Dorsolateral prefrontal cortex (tissue), 120 donors: ENCODE measurements at regions of chr3 and their contacts with region 1.

Region 1: DNA sequence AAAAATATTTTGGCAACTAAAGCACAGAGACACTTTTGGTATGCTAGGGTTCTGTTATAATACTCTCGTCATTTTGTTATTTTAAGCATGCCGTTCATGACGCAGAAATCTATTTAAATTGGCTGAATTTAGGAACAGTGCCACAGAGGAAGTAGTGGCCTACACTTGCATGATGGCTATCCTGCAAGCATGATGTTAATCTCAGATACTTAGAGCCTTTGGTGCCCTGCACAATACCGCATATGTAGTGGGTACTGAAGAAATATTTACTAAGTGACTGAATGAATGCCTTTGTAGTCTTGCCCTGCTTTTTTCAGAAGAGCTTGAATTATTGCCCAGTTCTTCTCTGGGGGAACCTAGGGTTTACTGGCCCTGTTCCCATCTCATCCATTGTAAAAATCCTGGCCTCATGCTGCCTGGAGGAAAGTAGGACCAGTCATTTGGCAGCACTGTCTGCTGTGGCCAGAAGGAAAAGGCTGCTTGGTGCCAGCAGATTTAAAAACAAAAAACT is 79.0 kb downstream of the SERPINI1 start:
- DNase-seq: peak in 8 of 10 donors; percentile 45 to 74 (median 66)
- H3K4me3 ChIP-seq: peak overlapping the region in 16 of 59 donors; percentile 1 to 35 (median 14)
- H3K27ac ChIP-seq: peak overlapping the region in 58 of 59 donors; percentile 19 to 85 (median 76)
- H3K27me3 ChIP-seq: no peaks in the 10 kb centered on the region
- CTCF ChIP-seq: peak in 15 of 56 donors; percentile 3 to 35 (median 19)

Region 2: DNA sequence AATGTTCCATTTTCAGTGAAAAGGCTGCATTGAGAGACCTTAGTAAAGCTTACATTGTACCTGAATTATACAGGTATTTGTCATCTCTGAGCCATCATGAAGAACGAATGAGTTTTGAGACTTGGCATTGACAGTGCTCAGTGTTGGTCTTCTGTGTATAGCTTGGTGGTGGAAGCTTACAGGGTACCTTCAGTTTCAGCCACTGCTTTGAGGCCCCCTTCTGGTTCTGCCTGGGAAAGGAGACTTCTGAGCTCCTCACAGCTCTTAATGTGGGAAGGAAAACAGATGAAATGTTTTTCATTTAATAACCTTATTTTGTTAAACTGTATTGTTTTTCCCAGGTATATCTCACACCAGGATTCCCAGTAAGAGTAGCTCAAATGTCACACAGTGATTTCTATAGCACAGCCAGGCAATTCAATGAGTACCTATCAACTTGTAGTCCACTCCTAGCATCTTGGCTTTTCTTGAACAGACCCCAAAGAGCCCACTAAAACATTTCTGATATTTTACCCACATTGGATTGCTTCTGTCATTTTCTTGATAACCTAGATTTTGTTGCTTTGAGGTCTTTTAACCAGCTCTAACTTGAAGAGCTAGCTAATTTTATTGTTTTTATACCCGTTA is 73.4 kb before region 1 on chr3:
- intact Hi-C with region 1: loop called in 1 of 2 experiments (anchors 2 kb)
- DNase-seq: peak in 8 of 10 donors; percentile 45 to 74 (median 61)
- H3K4me3 ChIP-seq: peak overlapping the region in 26 of 59 donors; percentile 1 to 96 (median 24)
- H3K27ac ChIP-seq: peak overlapping the region in 55 of 59 donors; percentile 6 to 99 (median 78)
- H3K27me3 ChIP-seq: no peaks in the 10 kb centered on the region
- CTCF ChIP-seq: peak in 53 of 56 donors; percentile 33 to 73 (median 57)

Region 3: GRCh38 chr3:167876620-167877281 is 62.3 kb after region 1 on chr3:
- intact Hi-C with region 1: loop called in 1 of 2 experiments (anchors 10 kb)
- DNase-seq: no peak
- H3K4me3 ChIP-seq: peak overlapping the region in 3 of 59 donors; percentile 3 to 11 (median 5)
- H3K27ac ChIP-seq: peak overlapping the region in 29 of 59 donors; percentile 4 to 61 (median 29)
- H3K27me3 ChIP-seq: no peaks in the 10 kb centered on the region
- CTCF ChIP-seq: no peak